ENCODE measurements at regions of chr19 and their contacts with region 1.

Region 1: DNA sequence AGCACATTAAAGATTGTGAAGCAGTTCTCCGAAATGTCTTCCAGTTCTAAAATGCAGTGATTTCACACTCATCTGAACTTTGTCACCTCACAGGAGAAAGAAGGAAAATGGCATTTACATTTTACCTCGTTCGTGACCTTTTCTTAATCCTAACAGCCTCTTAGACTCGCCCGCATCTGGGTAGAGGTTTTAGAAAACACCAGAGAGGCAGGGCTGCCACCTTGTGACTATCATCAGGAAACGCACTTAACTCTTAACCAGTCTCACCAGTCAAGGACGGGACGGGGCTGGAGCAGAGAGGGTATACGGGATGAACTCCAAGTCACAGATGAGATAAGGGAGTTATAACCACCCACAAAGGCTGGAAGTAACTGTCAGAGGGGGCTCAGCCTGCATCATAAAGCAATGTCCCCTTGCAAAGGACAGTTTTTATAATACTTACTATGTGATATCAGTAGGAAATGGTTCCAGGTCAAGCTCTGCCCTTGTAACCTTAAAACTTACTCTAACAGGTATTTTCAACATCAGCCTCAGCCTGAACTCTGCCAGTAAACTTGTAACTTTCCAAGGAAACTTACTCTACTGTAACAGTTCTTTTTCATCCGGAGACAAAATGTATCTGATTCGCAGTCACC is 8.6 kb upstream of the CEACAM6 start:
- DNase-seq: peak; percentile 20
- H3K4me3 Mint-ChIP-seq: no peak overlapping the region
- H3K27ac Mint-ChIP-seq: no peak overlapping the region
- H3K4me1 Mint-ChIP-seq: peaks cover 6% of the 10 kb centered on the region
- H3K27me3 Mint-ChIP-seq: peaks cover 62% of the 10 kb centered on the region

Region 2: GRCh38 chr19:41641879-41642485 is 104.7 kb before region 1 on chr19:
- intact Hi-C with region 1: loop called (anchors 5 kb)
- DNase-seq: peak; percentile 47
- H3K4me3 Mint-ChIP-seq: no peak overlapping the region
- H3K27ac Mint-ChIP-seq: no peak overlapping the region
- H3K4me1 Mint-ChIP-seq: no peaks in the 10 kb centered on the region
- H3K27me3 Mint-ChIP-seq: peaks cover 7% of the 10 kb centered on the region

Region 3: DNA sequence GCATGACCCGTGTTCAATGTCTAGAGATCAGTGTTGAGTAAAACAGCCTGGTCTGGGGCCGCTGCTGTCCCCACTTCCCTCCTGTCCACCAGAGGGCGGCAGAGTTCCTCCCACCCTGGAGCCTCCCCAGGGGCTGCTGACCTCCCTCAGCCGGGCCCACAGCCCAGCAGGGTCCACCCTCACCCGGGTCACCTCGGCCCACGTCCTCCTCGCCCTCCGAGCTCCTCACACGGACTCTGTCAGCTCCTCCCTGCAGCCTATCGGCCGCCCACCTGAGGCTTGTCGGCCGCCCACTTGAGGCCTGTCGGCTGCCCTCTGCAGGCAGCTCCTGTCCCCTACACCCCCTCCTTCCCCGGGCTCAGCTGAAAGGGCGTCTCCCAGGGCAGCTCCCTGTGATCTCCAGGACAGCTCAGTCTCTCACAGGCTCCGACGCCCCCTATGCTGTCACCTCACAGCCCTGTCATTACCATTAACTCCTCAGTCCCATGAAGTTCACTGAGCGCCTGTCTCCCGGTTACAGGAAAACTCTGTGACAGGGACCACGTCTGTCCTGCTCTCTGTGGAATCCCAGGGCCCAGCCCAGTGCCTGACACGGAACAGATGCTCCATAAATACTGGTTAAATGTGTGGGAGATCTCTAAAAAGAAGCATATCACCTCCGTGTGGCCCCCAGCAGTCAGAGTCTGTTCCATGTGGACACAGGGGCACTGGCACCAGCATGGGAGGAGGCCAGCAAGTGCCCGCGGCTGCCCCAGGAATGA is 39.8 kb before region 1 on chr19:
- intact Hi-C with region 1: loop called (anchors 1 kb)
- DNase-seq: peak; percentile 58
- H3K4me3 Mint-ChIP-seq: peak overlapping the region; percentile 31
- H3K27ac Mint-ChIP-seq: no peak overlapping the region
- H3K4me1 Mint-ChIP-seq: peaks cover 4% of the 10 kb centered on the region
- H3K27me3 Mint-ChIP-seq: peaks cover 15% of the 10 kb centered on the region

Region 4: GRCh38 chr19:41821003-41821735 is 74.5 kb after region 1 on chr19:
- intact Hi-C with region 1: no loop called
- DNase-seq: peak; percentile 30
- H3K4me3 Mint-ChIP-seq: no peak overlapping the region
- H3K27ac Mint-ChIP-seq: no peak overlapping the region
- H3K4me1 Mint-ChIP-seq: no peaks in the 10 kb centered on the region
- H3K27me3 Mint-ChIP-seq: peaks cover 20% of the 10 kb centered on the region